Aorta (tissue), 5 donors: ENCODE measurements at regions of chr17 and their contacts with region 1.

Region 1: DNA sequence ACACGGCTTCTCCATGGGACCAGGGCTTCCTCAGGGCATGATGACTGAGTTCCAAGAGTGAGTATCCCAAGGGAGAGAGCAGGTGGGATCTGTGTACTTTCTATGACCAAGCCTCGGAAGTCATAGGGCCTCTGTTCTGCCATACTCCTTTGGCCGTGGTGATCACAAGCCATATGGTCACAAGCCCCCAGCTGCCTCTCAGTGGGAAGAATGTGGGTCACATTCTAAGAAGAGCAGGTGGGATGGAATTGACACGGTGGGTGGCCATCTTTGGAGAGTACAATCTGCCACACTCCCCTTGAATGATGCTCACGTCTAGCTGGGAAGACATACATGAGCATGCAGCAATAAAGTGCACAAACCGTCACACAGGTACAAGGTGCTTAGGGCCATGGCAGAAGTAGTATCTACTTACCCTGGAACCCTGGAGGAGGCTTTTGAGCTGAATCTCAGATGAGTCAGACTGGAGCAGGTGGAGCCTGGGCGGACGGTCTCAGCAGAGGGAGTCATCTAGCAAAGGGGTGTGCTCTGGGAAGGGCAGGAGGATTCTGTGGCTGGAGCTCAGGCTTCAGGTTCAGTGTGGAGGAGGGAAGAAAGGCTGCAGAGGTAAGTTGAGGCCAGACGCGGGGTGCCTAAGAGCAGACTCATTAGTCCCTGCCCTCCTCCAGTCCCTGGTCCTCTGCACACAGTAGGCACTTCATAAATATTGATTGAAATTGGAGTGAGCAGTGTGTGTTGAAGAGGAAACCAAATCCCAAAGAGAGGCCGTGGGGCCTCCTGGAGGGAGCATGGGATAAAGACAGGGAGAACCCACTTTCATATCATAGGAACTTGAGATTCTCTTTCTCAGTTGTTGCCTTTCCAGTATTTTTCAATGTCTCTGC is 26.6 kb downstream of the GOSR2 start:
- DNase-seq: no peak
- ATAC-seq: no peak
- H3K4me3 ChIP-seq: no peak overlapping the region
- H3K27ac ChIP-seq: no peak overlapping the region
- H3K4me1 ChIP-seq: no peaks in the 10 kb centered on the region
- H3K27me3 ChIP-seq: no peaks in the 10 kb centered on the region

Region 2: DNA sequence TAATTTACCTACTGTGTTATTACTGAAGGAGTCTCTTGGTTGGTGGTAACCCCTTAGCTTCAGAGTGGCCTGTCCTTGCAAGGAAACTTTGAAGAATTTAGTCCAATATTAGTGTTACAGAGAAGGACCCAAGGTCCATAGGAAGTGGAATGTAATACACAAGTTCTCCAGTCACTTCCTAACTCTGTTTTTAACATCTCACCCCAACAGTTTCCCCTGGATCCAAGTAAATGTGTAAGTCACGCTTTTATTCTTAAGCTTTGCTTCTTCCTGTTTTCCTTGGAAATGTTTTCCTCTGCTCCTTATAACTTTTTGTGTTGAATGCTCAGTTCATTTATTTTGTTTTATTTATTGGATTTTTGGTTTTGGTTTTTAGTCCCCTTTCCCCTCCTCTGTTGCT is 55.4 kb after region 1 on chr17:
- intact Hi-C with region 1: loop called in 1 of 2 experiments (anchors 5 kb)
- DNase-seq: no peak
- ATAC-seq: no peak
- H3K4me3 ChIP-seq: no peak overlapping the region
- H3K27ac ChIP-seq: no peak overlapping the region
- H3K4me1 ChIP-seq: no peaks in the 10 kb centered on the region
- H3K27me3 ChIP-seq: no peaks in the 10 kb centered on the region